ENCODE measurements at regions of chr11 and their contacts with region 1.

Region 1: GRCh38 chr11:76207642-76208401 is 1.5 kb upstream of the WNT11 start:
- DNase-seq: peak; percentile 56 to 91 (median 74)
- ATAC-seq: peak; percentile 78
- H3K4me3 ChIP-seq: peak overlapping the region; percentile 65
- H3K4me3 Mint-ChIP-seq: peak overlapping the region; percentile 86
- H3K27ac ChIP-seq: no peak overlapping the region
- H3K27ac Mint-ChIP-seq: no peak overlapping the region
- H3K4me1 ChIP-seq: peaks cover 56% of the 10 kb centered on the region
- H3K4me1 Mint-ChIP-seq: peaks cover 21% of the 10 kb centered on the region
- H3K27me3 ChIP-seq: peaks cover 51 to 77% of the 10 kb centered on the region in 2 experiments
- H3K27me3 Mint-ChIP-seq: peaks cover 59% of the 10 kb centered on the region
- CTCF ChIP-seq: peak; percentile 96

Region 2: DNA sequence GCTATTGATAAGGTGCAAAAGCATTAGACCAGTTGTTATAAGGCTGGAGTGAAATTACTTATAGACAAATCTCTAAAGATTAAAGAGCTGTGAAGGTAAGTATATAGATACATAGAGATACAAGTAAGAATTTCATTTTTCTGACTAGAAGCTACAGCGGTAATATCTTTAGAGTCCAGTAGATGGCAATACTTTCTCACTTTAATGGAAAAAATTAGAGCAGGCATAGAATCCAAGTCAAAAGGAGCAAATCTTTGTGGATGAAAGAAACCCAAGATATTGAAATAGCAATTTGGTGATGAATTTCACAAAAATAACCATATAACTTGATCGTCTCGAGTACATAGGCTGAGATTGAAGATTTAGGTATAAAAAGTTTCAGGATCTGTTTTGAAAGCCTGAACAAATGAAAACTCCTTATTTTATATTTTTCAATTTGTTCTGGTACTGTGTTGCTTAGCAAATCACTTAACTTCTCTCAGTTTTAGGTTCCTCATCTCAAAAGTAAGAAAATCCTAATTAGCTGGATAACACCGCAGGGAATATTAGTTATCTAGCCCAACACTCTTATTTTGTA is 310.9 kb before region 1 on chr11:
- CTCF ChIA-PET with region 1: interaction called, 6 read pairs
- POLR2A ChIA-PET with region 1: no interaction called
- intact Hi-C with region 1: loop called (anchors 2 to 5 kb)
- DNase-seq: peak in 3 of 14 experiments; percentile 44 to 51 (median 44)
- ATAC-seq: no peak
- H3K4me3 ChIP-seq: no peak overlapping the region
- H3K4me3 Mint-ChIP-seq: no peak overlapping the region
- H3K27ac ChIP-seq: no peak overlapping the region
- H3K27ac Mint-ChIP-seq: no peak overlapping the region
- H3K4me1 ChIP-seq: no peaks in the 10 kb centered on the region
- H3K4me1 Mint-ChIP-seq: peaks cover 5% of the 10 kb centered on the region
- H3K27me3 ChIP-seq: no peaks in the 10 kb centered on the region
- H3K27me3 Mint-ChIP-seq: no peaks in the 10 kb centered on the region
- CTCF ChIP-seq: peak; percentile 59

Region 3: DNA sequence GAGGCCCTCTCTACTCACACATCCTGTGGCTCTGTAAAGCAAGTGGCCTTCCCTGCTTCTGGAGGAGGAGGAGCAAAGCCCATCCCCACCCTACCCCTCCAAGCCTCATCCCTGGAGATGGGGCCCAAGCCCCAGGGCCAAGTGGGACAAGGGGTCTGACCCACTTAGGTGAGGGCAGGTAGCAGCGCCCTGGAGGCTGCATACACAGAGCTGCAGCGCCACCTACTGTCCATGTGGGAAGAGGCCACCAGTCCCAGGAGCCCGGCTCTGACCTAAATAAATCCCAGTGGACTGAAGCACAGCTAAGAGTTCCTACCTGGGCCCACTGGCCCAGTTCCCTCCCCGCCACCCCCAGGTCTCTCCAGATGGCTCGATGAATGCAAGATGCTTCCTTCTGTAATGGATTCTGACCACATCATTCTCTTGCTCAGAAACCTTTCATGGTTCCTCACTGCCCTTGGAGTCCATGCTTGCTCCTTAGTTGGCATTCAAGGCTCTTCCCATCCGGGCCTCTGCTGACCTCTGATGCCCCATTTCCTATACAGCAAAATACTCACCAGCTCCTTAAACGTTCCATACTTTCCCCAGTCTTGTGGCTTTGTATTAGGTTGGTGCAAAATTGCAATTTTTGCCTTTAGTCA is 111.0 kb after region 1 on chr11:
- CTCF ChIA-PET with region 1: interaction called, 86 read pairs
- POLR2A ChIA-PET with region 1: interaction called, 17 read pairs
- intact Hi-C with region 1: loop called (anchors 1 kb)
- DNase-seq: peak; percentile 78 to 94 (median 84)
- ATAC-seq: peak; percentile 97
- H3K4me3 ChIP-seq: no peak overlapping the region
- H3K4me3 Mint-ChIP-seq: no peak overlapping the region
- H3K27ac ChIP-seq: no peak overlapping the region
- H3K27ac Mint-ChIP-seq: no peak overlapping the region
- H3K4me1 ChIP-seq: peaks cover 7% of the 10 kb centered on the region
- H3K4me1 Mint-ChIP-seq: no peaks in the 10 kb centered on the region
- H3K27me3 ChIP-seq: peaks cover 21% of the 10 kb centered on the region in 2 experiments
- H3K27me3 Mint-ChIP-seq: peaks cover 42% of the 10 kb centered on the region
- CTCF ChIP-seq: peak; percentile 84

Region 4: DNA sequence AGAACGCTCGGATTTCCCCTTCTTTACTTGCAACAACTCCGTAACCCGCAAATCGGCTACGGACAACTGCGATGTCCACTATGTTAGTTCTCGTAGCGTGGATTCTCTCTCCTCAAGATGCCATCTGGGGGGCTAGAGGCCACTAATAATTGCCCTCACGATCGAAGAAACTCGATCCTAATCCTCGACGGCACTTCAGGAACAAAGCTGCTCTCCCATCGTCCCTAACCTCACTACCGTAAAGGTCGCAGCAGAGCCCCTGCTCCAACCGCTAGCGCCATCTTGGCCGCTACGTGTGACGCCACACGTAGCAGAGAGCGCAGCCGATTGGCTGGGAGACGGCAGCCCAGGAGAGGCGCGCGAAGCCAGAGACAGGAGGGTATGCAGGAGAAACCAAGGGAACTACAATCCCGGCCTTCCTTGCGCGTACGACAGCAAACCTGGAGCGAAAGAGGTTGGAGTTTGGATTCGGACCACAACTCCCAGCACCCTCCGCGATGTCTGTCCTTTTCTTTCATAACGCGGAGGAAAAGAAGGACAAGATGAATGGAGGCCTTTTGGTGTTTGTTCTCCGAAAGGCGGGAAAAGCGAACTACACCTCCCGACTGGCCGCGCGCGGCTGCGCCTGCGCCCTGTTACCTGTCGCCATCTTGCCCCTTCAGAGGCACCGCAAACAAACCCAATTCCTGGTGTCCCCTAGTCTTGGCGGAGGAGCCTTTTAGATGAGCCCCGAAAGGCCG is 236.7 kb after region 1 on chr11 and contains the start of gene EMSY:
- CTCF ChIA-PET with region 1: interaction called, 9 read pairs
- POLR2A ChIA-PET with region 1: interaction called, 6 read pairs
- intact Hi-C with region 1: loop called in 1 of 2 experiments (anchors 10 kb)
- DNase-seq: peak; percentile 82 to 98 (median 88)
- ATAC-seq: peak; percentile 91
- H3K4me3 ChIP-seq: peak within 1 kb of the TSS; percentile 78
- H3K4me3 Mint-ChIP-seq: peak within 1 kb of the TSS; percentile 94
- H3K27ac ChIP-seq: peak within 1 kb of the TSS; percentile 76 to 91
- H3K27ac Mint-ChIP-seq: peak within 1 kb of the TSS; percentile 95
- H3K4me1 ChIP-seq: peaks cover 22% of the 10 kb centered on the region
- H3K4me1 Mint-ChIP-seq: peaks cover 53% of the 10 kb centered on the region
- H3K27me3 ChIP-seq: no peaks in the 10 kb centered on the region
- H3K27me3 Mint-ChIP-seq: no peaks in the 10 kb centered on the region
- CTCF ChIP-seq: no peak
- total RNA-seq, gene EMSY: 20.9 to 21.8 TPM

Region 5: DNA sequence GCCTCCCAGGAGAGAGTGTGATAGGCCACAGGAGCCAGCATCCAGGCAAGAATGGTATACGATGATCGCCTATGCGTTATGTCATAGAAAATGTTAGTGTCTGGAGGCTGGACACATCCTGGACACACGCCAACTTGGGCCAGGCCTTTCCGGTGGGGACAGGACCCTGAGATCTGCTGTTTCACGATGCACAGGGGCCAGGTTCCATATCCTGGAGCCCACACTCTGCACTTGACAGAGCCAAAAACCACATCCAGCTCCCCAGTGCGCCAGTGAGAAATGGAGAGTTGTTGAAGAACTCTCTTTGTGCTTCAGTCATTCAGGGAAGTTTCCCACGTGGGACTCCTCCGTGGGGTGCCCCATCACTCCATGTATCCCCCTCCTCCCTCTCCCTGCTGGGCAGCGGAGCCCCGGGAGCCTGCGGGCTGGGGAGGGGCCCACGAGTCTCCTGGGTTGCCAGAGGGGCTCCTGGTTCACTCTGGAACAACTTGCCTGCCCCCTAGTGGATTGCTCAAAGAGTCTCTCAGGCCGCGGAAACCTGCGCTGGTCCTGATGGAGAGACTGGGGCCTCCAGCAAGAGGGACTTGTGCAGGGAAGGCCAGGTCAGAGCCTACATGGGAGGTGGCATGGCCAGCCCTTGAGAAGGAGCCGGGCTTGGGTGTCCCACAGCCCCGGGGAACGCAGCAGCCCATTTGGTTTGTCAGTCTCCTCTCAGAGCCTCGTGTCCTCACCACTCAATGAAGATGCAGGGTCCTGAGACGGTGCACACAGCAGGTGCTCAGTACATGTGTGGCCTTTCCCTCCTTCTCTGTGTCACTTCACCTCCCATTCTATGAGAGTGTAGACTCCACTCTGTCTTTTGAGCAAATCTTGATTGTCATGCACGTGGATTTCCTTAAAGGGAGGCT is 472.9 kb after region 1 on chr11:
- CTCF ChIA-PET with region 1: no interaction called
- POLR2A ChIA-PET with region 1: no interaction called
- intact Hi-C with region 1: loop called (anchors 2 to 5 kb)
- DNase-seq: peak; percentile 23 to 73 (median 40)
- ATAC-seq: peak; percentile 52
- H3K4me3 ChIP-seq: no peak overlapping the region
- H3K4me3 Mint-ChIP-seq: no peak overlapping the region
- H3K27ac ChIP-seq: no peak overlapping the region
- H3K27ac Mint-ChIP-seq: no peak overlapping the region
- H3K4me1 ChIP-seq: peaks cover 8% of the 10 kb centered on the region
- H3K4me1 Mint-ChIP-seq: no peaks in the 10 kb centered on the region
- H3K27me3 ChIP-seq: no peaks in the 10 kb centered on the region
- H3K27me3 Mint-ChIP-seq: peaks cover 5% of the 10 kb centered on the region
- CTCF ChIP-seq: peak; percentile 58